Calu3 (cell line): ENCODE measurements at regions of chr3 and their contacts with region 1.

Region 1: GRCh38 chr3:60514866-60515265 is 736.4 kb downstream of the FHIT start:
- DNase-seq: no peak
- H3K4me3 Mint-ChIP-seq: no peak overlapping the region
- H3K27ac Mint-ChIP-seq: no peak overlapping the region
- H3K4me1 Mint-ChIP-seq: no peaks in the 10 kb centered on the region
- H3K27me3 Mint-ChIP-seq: no peaks in the 10 kb centered on the region
- CTCF ChIP-seq: no peak

Region 2: DNA sequence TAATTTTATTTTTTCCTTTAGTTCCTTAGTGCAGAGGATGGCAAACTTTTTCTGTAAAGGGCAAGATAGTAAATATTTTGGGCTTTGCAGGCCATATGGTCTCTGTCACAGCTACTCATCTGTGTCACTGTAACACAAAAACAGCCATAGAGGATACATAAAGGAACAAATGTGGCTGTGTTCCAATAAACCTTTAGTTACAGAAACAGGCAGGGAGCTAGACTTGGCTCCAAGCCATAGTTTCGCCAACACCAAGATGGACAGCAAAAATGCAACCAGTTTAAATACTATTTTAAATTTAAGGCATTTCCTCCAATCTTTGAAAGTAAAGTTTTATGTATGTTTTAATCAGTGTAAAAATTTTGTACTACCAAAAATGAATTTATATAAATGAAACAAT is 17.0 kb before region 1 on chr3:
- CTCF ChIA-PET with region 1: no interaction called
- intact Hi-C with region 1: loop called (anchors 1 kb)
- DNase-seq: no peak
- H3K4me3 Mint-ChIP-seq: no peak overlapping the region
- H3K27ac Mint-ChIP-seq: no peak overlapping the region
- H3K4me1 Mint-ChIP-seq: no peaks in the 10 kb centered on the region
- H3K27me3 Mint-ChIP-seq: no peaks in the 10 kb centered on the region
- CTCF ChIP-seq: no peak

Region 3: DNA sequence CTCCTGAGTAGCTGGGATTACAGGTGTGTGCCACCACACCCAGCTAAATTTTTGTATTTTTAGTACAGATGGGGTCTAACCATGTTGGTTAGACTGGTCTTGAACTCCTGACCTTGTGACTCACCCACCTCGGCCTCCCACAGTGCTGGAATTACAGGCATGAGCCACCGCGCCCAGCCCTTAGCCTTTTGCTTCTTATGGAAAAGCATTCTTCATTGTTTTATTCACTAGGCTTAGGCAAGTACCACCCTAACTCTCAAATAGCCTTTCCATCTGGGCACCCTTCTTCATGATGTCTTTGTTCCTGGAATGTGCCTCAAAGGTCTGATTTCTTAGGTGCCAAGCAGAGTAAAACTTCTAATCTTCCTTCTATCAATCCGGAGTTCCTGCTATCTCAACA is 94.6 kb after region 1 on chr3:
- CTCF ChIA-PET with region 1: no interaction called
- intact Hi-C with region 1: no loop called
- DNase-seq: peak; percentile 30
- H3K4me3 Mint-ChIP-seq: no peak overlapping the region
- H3K27ac Mint-ChIP-seq: no peak overlapping the region
- H3K4me1 Mint-ChIP-seq: peaks cover 7% of the 10 kb centered on the region
- H3K27me3 Mint-ChIP-seq: no peaks in the 10 kb centered on the region
- CTCF ChIP-seq: no peak